Activated naive CD8-positive, alpha-beta T cell treated with anti-CD3 and anti-CD28 coated beads, Interleukin-2, amount 10 ng/mL, durations not matched to agents 7 days and 5 days (primary cell): ENCODE measurements at regions of chr6 and their contacts with region 1.

Region 1: GRCh38 chr6:41705996-41706835 is 29.2 kb downstream of the TFEB start:
- DNase-seq: peak; percentile 64
- ATAC-seq: peak; percentile 79
- H3K4me3 Mint-ChIP-seq: peak overlapping the region; percentile 71
- H3K27ac Mint-ChIP-seq: peak overlapping the region; percentile 82
- H3K4me1 Mint-ChIP-seq: peaks cover 27% of the 10 kb centered on the region
- H3K27me3 Mint-ChIP-seq: peaks cover 1% of the 10 kb centered on the region

Region 2: GRCh38 chr6:41716516-41717391 is 10.5 kb after region 1 on chr6:
- POLR2A ChIA-PET with region 1: interaction called, 17 read pairs
- DNase-seq: no peak
- ATAC-seq: no peak
- H3K4me3 Mint-ChIP-seq: peak overlapping the region; percentile 29
- H3K27ac Mint-ChIP-seq: peak overlapping the region; percentile 78
- H3K4me1 Mint-ChIP-seq: peaks cover 31% of the 10 kb centered on the region
- H3K27me3 Mint-ChIP-seq: no peaks in the 10 kb centered on the region

Region 3: DNA sequence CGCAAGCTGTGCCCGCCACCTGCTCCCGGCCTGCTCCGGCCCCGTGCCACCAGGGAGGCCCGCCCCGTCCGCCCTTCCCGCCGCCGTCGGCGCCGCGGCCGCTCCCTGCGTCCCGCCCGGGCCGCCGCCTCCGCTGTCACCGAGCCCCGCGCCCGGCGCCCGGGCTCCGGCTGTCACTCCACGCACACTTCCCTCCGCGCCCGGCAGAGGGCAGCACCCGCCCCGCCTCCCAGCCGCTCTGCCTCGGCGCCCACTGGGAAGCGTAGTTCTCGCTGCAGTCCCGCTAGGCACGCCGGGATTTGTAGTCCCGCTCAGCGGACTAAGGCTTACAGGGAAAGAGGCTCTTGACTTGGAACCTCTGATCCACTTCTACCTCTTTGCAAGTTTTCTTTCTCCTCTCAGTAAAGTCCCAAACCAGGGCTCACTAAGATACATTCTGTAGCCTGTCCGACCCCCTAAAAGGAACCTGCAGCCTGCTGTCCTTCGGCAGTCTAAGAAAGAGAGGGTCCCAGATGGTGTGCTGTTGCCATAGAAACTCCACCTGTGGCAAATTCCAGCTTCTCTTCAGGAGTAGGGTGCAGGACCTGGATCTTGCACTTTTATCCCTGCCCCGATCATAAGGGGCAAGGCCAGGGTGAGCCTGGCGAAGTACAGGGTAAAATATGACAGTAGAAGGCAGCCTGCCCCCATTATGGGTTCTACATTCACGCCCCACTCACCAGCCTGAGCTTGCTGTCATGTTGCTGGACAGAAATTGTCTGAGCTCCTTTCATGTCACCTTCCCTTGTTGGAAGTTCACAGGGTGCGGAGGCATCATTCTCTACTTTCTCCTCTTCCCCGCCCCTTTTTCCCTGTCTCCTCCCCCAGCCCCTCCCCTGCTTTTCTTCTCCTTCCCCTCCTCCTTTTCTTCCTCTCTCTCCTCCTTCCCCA is 29.5 kb after region 1 on chr6 and contains the start of gene TFEB:
- POLR2A ChIA-PET with region 1: interaction called, 27 read pairs
- DNase-seq: peak; percentile 98
- ATAC-seq: peak; percentile 60
- H3K4me3 Mint-ChIP-seq: peak within 1 kb of the TSS; percentile 78
- H3K27ac Mint-ChIP-seq: peak within 1 kb of the TSS; percentile 75
- H3K4me1 Mint-ChIP-seq: peaks cover 24% of the 10 kb centered on the region
- H3K27me3 Mint-ChIP-seq: no peaks in the 10 kb centered on the region
- total RNA-seq, gene TFEB: 17.6 TPM

Region 4: GRCh38 chr6:42402184-42402583 is 696.0 kb after region 1 on chr6:
- POLR2A ChIA-PET with region 1: no interaction called
- DNase-seq: no peak
- ATAC-seq: peak; percentile 86
- H3K4me3 Mint-ChIP-seq: peak overlapping the region; percentile 56
- H3K27ac Mint-ChIP-seq: peak overlapping the region; percentile 39
- H3K4me1 Mint-ChIP-seq: peaks cover 45% of the 10 kb centered on the region
- H3K27me3 Mint-ChIP-seq: no peaks in the 10 kb centered on the region